Activated B cell treated with CpG ODN at 0.5 μM for 24 hours (primary cell): ENCODE measurements at regions of chr14 and their contacts with region 1.

Region 1: GRCh38 chr14:93543766-93544165 is 113.0 kb downstream of the UNC79 start:
- DNase-seq: no peak
- ATAC-seq: no peak
- H3K4me3 Mint-ChIP-seq: no peak overlapping the region
- H3K27ac Mint-ChIP-seq: no peak overlapping the region
- H3K4me1 Mint-ChIP-seq: peaks cover 9% of the 10 kb centered on the region
- H3K27me3 Mint-ChIP-seq: peaks cover 6% of the 10 kb centered on the region
- CTCF ChIP-seq: no peak

Region 2: GRCh38 chr14:93510066-93510465 is 33.7 kb before region 1 on chr14:
- CTCF ChIA-PET with region 1: no interaction called
- POLR2A ChIA-PET with region 1: no interaction called
- intact Hi-C with region 1: no loop called
- DNase-seq: no peak
- ATAC-seq: no peak
- H3K4me3 Mint-ChIP-seq: no peak overlapping the region
- H3K27ac Mint-ChIP-seq: no peak overlapping the region
- H3K4me1 Mint-ChIP-seq: peaks cover 10% of the 10 kb centered on the region
- H3K27me3 Mint-ChIP-seq: no peaks in the 10 kb centered on the region
- CTCF ChIP-seq: no peak

Region 3: GRCh38 chr14:93619176-93619793 is 75.5 kb after region 1 on chr14:
- CTCF ChIA-PET with region 1: no interaction called
- POLR2A ChIA-PET with region 1: no interaction called
- intact Hi-C with region 1: loop called (anchors 5 kb)
- DNase-seq: no peak
- ATAC-seq: no peak
- H3K4me3 Mint-ChIP-seq: no peak overlapping the region
- H3K27ac Mint-ChIP-seq: no peak overlapping the region
- H3K4me1 Mint-ChIP-seq: no peaks in the 10 kb centered on the region
- H3K27me3 Mint-ChIP-seq: peaks cover 4% of the 10 kb centered on the region
- CTCF ChIP-seq: peak; percentile 46

Region 4: DNA sequence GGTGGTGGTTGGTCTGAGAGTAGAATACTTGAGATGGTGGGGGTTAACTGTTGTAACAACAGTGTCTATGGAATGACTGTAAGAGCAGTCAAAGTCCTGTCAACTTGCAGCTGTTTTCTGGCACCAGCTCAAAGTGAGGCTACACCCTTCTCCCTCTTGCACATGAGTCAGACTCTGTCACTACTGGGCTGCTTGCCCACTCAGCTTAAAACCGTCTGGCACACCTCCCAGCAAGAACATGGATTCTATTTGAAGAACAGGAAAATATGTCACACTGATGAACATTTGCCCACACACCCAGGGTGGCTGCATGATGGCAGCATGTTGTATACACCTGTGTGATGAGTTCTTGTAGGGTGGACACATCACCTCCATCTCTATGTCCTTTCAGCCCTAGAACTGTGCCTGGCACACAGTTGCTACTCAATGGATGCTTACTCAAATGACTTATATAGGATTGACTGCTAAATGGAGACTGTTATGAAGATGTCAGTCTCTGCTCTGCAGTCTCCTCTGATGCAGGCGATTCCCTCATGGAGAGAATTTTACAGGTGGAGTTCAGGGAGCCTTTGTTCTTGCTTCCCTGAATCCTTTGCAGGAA is 798.7 kb after region 1 on chr14:
- CTCF ChIA-PET with region 1: no interaction called
- POLR2A ChIA-PET with region 1: no interaction called
- intact Hi-C with region 1: no loop called
- DNase-seq: no peak
- ATAC-seq: no peak
- H3K4me3 Mint-ChIP-seq: no peak overlapping the region
- H3K27ac Mint-ChIP-seq: no peak overlapping the region
- H3K4me1 Mint-ChIP-seq: peaks cover 20% of the 10 kb centered on the region
- H3K27me3 Mint-ChIP-seq: peaks cover 5% of the 10 kb centered on the region
- CTCF ChIP-seq: no peak